ENCODE measurements at regions of chr7 and their contacts with region 1.

Region 1: GRCh38 chr7:95628831-95629439 is 32.6 kb upstream of the PDK4 start:
- DNase-seq: peak in 2 of 5 donors; percentile 21 to 35
- ATAC-seq: peak; percentile 86 to 96 (median 92)
- H3K4me3 ChIP-seq: no peak overlapping the region
- H3K27ac ChIP-seq: peak overlapping the region; percentile 10 to 93 (median 78)
- H3K4me1 ChIP-seq: peaks cover 0 to 19% (median 8%) of the 10 kb centered on the region in 12 donors
- H3K27me3 ChIP-seq: no peaks in the 10 kb centered on the region
- CTCF ChIP-seq: peak in 2 of 12 donors; percentile 5 to 31
- POLR2A ChIP-seq: no peak

Region 2: GRCh38 chr7:95596198-95597063 is 32.5 kb before region 1 on chr7 and contains the start of gene PDK4:
- intact Hi-C with region 1: loop called in 3 of 10 experiments (anchors 1 to 2 kb)
- DNase-seq: peak; percentile 92 to 97 (median 95)
- ATAC-seq: peak; percentile 83 to 96 (median 90)
- H3K4me3 ChIP-seq: peak within 1 kb of the TSS; percentile 70 to 98 (median 84)
- H3K27ac ChIP-seq: peak within 1 kb of the TSS; percentile 87 to 99 (median 96)
- H3K4me1 ChIP-seq: peaks cover 5 to 62% (median 40%) of the 10 kb centered on the region in 12 donors
- H3K27me3 ChIP-seq: no peaks in the 10 kb centered on the region
- CTCF ChIP-seq: no peak
- POLR2A ChIP-seq: peak; percentile 72 to 100
- total RNA-seq, gene PDK4: 45.6 to 4,362 (median 173) TPM

Region 3: GRCh38 chr7:95660023-95660434 is 31.1 kb after region 1 on chr7:
- intact Hi-C with region 1: loop called in 1 of 10 experiments (anchors 1 kb)
- DNase-seq: peak in 2 of 5 donors; percentile 22 to 31
- ATAC-seq: peak; percentile 90 to 98 (median 94)
- H3K4me3 ChIP-seq: no peak overlapping the region
- H3K27ac ChIP-seq: peak overlapping the region in 3 of 12 donors; percentile 25 to 75 (median 60)
- H3K4me1 ChIP-seq: peaks cover 0 to 2% (median 0%) of the 10 kb centered on the region in 12 donors
- H3K27me3 ChIP-seq: no peaks in the 10 kb centered on the region
- CTCF ChIP-seq: no peak
- POLR2A ChIP-seq: no peak

Region 4: DNA sequence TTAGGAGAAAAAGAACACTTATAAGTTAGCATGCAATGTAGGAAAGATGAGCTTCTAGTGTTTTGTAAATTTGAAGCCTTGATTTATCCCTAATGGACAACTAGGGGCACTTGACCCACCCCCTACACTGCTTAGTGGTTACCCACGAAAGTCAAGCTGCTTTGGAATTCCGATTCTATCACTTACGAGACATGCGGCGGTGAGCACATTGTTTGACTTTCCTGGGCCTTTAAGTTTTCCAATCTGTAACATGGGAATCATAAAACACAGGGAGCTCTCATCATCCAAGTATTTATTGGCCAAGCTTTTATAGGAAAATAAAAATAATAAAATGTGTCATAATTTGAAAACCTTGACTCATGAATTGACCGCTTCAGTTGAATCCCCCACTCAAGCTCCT is 46.1 kb after region 1 on chr7:
- intact Hi-C with region 1: loop called in 3 of 10 experiments (anchors 5 to 10 kb)
- DNase-seq: no peak
- ATAC-seq: no peak
- H3K4me3 ChIP-seq: no peak overlapping the region
- H3K27ac ChIP-seq: no peak overlapping the region
- H3K4me1 ChIP-seq: no peaks in the 10 kb centered on the region
- H3K27me3 ChIP-seq: no peaks in the 10 kb centered on the region
- CTCF ChIP-seq: no peak
- POLR2A ChIP-seq: no peak

Region 5: DNA sequence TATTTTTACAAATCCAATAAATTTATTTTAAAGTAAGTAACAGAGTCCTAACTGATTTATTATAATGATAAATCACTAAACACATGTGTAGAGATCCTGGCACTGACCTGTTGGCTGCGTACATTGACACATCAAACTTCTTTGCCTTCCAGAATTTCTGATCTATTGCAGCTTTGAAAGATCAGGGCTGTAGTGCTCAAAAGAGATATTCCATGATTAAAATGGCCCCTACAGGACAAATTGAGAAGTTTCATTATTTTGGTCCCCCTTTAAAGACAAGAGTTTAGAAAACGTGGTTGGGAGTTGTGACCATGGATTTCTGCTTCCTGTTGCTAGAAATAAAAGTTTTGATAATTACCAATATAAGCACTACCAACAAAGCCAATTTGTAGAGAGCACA is 55.1 kb after region 1 on chr7:
- intact Hi-C with region 1: loop called in 2 of 10 experiments (anchors 5 to 10 kb)
- DNase-seq: no peak
- ATAC-seq: peak; percentile 23 to 72 (median 36)
- H3K4me3 ChIP-seq: peak overlapping the region in 1 of 12 donors; percentile 22
- H3K27ac ChIP-seq: peak overlapping the region in 1 of 12 donors; percentile 62
- H3K4me1 ChIP-seq: peaks cover 0 to 12% (median 0%) of the 10 kb centered on the region in 12 donors
- H3K27me3 ChIP-seq: no peaks in the 10 kb centered on the region
- CTCF ChIP-seq: peak; percentile 45 to 77 (median 60)
- POLR2A ChIP-seq: no peak